CD4-positive, alpha-beta T cell (primary cell): ENCODE measurements at regions of chr1 and their contacts with region 1.

Region 1: GRCh38 chr1:117312225-117313138 is 54.8 kb upstream of the MAN1A2 start:
- DNase-seq: peak in 4 of 14 experiments; percentile 4 to 58 (median 40)
- ATAC-seq: peak; percentile 62
- H3K4me3 ChIP-seq: no peak overlapping the region
- H3K4me3 Mint-ChIP-seq: no peak overlapping the region
- H3K27ac ChIP-seq: no peak overlapping the region
- H3K27ac Mint-ChIP-seq: no peak overlapping the region
- H3K4me1 ChIP-seq: no peaks in the 10 kb centered on the region
- H3K4me1 Mint-ChIP-seq: no peaks in the 10 kb centered on the region
- H3K27me3 ChIP-seq: no peaks in the 10 kb centered on the region
- H3K27me3 Mint-ChIP-seq: peaks cover 6% of the 10 kb centered on the region
- CTCF ChIP-seq: peak; percentile 41

Region 2: DNA sequence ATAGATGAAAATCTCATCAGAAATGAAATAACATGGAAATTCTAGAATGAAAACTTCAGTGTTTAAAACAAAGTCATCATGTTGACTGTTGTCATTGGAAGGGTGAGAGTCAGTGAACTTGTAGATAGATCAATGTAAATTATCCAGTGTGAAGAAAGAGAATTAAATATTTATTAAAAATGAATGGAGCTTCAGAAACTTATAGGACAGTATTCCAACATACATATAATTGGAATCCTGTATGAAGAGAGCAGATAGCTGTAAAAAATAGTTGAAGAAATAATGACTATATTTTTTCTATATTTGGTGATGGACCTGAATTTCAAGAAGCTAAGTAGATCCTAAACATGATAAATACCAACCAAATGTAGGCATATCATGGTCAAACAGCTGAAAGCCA is 114.8 kb after region 1 on chr1:
- CTCF ChIA-PET with region 1: no interaction called
- POLR2A ChIA-PET with region 1: no interaction called
- intact Hi-C with region 1: loop called in 1 of 2 experiments (anchors 10 kb)
- DNase-seq: no peak
- ATAC-seq: no peak
- H3K4me3 ChIP-seq: no peak overlapping the region
- H3K4me3 Mint-ChIP-seq: no peak overlapping the region
- H3K27ac ChIP-seq: no peak overlapping the region
- H3K27ac Mint-ChIP-seq: no peak overlapping the region
- H3K4me1 ChIP-seq: no peaks in the 10 kb centered on the region
- H3K4me1 Mint-ChIP-seq: no peaks in the 10 kb centered on the region
- H3K27me3 ChIP-seq: no peaks in the 10 kb centered on the region
- H3K27me3 Mint-ChIP-seq: no peaks in the 10 kb centered on the region
- CTCF ChIP-seq: no peak

Region 3: DNA sequence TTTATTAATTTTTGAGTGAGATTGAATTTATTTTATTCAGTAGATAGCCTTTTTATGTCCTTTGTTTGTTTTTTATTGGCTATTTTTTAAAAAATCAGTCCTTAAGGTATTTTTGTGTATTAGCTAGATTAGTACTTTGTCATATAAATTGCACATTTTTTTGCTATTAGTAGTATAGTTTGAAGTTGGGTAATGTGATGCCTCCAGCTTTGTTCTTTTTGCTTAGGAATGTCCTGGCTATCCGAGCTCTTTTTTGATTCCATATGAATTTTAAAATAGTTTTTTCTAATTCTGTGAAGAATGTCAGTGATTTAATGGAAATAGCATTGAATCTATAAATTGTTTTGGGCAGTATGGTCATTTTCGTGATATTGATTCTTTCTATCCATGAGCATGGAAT is 135.2 kb after region 1 on chr1:
- CTCF ChIA-PET with region 1: no interaction called
- POLR2A ChIA-PET with region 1: no interaction called
- intact Hi-C with region 1: loop called in 1 of 2 experiments (anchors 10 kb)
- DNase-seq: no peak
- ATAC-seq: no peak
- H3K4me3 ChIP-seq: no peak overlapping the region
- H3K4me3 Mint-ChIP-seq: no peak overlapping the region
- H3K27ac ChIP-seq: no peak overlapping the region
- H3K27ac Mint-ChIP-seq: no peak overlapping the region
- H3K4me1 ChIP-seq: no peaks in the 10 kb centered on the region
- H3K4me1 Mint-ChIP-seq: no peaks in the 10 kb centered on the region
- H3K27me3 ChIP-seq: no peaks in the 10 kb centered on the region
- H3K27me3 Mint-ChIP-seq: no peaks in the 10 kb centered on the region
- CTCF ChIP-seq: no peak

Region 4: DNA sequence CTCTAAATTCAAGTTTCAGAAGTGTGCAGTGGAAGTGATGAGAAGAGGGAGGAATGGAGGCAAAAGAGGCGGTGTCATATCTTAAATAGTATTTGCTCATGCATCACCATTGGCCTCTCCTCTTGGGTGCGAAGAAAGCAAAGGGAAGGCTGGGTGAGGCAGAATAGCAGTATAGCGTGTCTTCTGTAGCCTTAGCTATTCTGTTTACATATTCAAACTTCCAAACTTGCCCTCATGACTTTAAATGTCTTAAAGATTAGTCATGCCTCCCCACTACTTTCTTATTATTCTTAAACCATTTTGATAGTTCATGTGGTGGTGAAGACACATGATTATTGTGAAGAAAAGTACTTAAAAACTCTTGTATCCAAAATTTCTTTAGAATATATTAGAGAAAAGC is 188.8 kb after region 1 on chr1:
- CTCF ChIA-PET with region 1: no interaction called
- POLR2A ChIA-PET with region 1: no interaction called
- intact Hi-C with region 1: loop called in 1 of 2 experiments (anchors 10 kb)
- DNase-seq: no peak
- ATAC-seq: no peak
- H3K4me3 ChIP-seq: no peak overlapping the region
- H3K4me3 Mint-ChIP-seq: no peak overlapping the region
- H3K27ac ChIP-seq: no peak overlapping the region
- H3K27ac Mint-ChIP-seq: no peak overlapping the region
- H3K4me1 ChIP-seq: no peaks in the 10 kb centered on the region
- H3K4me1 Mint-ChIP-seq: no peaks in the 10 kb centered on the region
- H3K27me3 ChIP-seq: no peaks in the 10 kb centered on the region
- H3K27me3 Mint-ChIP-seq: no peaks in the 10 kb centered on the region
- CTCF ChIP-seq: no peak